CD4-positive, alpha-beta T cell (primary cell): ENCODE measurements at regions of chr13 and their contacts with region 1.

Region 1: DNA sequence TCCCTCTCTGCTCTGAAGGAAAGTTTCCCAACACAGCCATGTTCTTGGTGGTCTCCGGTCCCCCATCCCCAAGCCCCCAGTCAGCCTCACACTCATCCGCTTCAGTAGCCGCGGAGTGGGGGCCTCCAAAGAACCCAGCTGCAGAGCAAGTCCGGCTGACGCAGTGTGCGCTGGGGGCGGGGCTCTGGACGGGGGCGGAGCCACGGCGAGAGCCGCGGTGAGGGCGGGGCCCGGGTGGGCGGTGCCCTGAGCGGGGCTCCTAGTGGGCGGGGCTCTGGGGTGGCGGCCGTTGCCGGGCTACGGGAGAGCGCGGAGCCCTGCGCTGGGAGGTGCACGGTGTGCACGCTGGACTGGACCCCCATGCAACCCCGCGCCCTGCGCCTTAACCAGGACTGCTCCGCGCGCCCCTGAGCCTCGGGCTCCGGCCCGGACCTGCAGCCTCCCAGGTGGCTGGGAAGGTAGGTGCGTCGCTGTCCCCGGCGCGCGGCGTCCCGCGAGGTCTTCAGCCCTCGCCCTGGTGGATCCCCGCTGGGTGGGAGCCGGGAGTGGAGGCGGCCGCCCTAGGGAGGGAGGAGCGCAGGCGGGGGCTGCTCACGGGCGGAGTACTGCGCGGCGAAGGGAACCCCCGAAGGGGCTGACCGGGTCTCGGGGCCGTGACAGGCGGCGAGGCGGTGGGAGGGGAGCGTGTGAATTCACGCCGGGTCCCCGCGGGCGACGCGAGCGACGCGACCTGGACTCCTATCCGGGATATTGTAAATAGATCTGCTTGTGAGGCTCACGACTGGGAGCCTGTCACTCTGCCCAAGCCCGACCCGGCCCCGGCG is 9.1 kb downstream of the TNFRSF19 start:
- DNase-seq: peak; percentile 82 to 95 (median 90)
- ATAC-seq: peak; percentile 94
- H3K4me3 ChIP-seq: peak overlapping the region; percentile 70
- H3K4me3 Mint-ChIP-seq: peak overlapping the region; percentile 87
- H3K27ac ChIP-seq: peak overlapping the region in 1 of 2 donors; percentile 56
- H3K27ac Mint-ChIP-seq: no peak overlapping the region
- H3K4me1 ChIP-seq: peaks cover 18% of the 10 kb centered on the region
- H3K4me1 Mint-ChIP-seq: peaks cover 22% of the 10 kb centered on the region
- H3K27me3 ChIP-seq: peaks cover 10 to 37% of the 10 kb centered on the region in 2 experiments
- H3K27me3 Mint-ChIP-seq: peaks cover 68% of the 10 kb centered on the region
- CTCF ChIP-seq: no peak

Region 2: GRCh38 chr13:23466144-23467002 is 112.9 kb before region 1 on chr13:
- CTCF ChIA-PET with region 1: no interaction called
- POLR2A ChIA-PET with region 1: no interaction called
- intact Hi-C with region 1: loop called in 1 of 2 experiments (anchors 5 kb)
- DNase-seq: peak; percentile 28 to 81 (median 52)
- ATAC-seq: peak; percentile 88
- H3K4me3 ChIP-seq: peak overlapping the region; percentile 49
- H3K4me3 Mint-ChIP-seq: peak overlapping the region; percentile 86
- H3K27ac ChIP-seq: no peak overlapping the region
- H3K27ac Mint-ChIP-seq: no peak overlapping the region
- H3K4me1 ChIP-seq: peaks cover 14% of the 10 kb centered on the region
- H3K4me1 Mint-ChIP-seq: no peaks in the 10 kb centered on the region
- H3K27me3 ChIP-seq: no peaks in the 10 kb centered on the region
- H3K27me3 Mint-ChIP-seq: peaks cover 6% of the 10 kb centered on the region
- CTCF ChIP-seq: peak; percentile 63

Region 3: GRCh38 chr13:23871616-23872220 is 292.4 kb after region 1 on chr13:
- CTCF ChIA-PET with region 1: no interaction called
- POLR2A ChIA-PET with region 1: no interaction called
- intact Hi-C with region 1: loop called in 1 of 2 experiments (anchors 5 kb)
- DNase-seq: peak in 3 of 14 experiments; percentile 13 to 27 (median 18)
- ATAC-seq: no peak
- H3K4me3 ChIP-seq: no peak overlapping the region
- H3K4me3 Mint-ChIP-seq: no peak overlapping the region
- H3K27ac ChIP-seq: no peak overlapping the region
- H3K27ac Mint-ChIP-seq: no peak overlapping the region
- H3K4me1 ChIP-seq: no peaks in the 10 kb centered on the region
- H3K4me1 Mint-ChIP-seq: no peaks in the 10 kb centered on the region
- H3K27me3 ChIP-seq: no peaks in the 10 kb centered on the region
- H3K27me3 Mint-ChIP-seq: no peaks in the 10 kb centered on the region
- CTCF ChIP-seq: peak; percentile 80

Region 4: GRCh38 chr13:23888658-23889614 is 309.7 kb after region 1 on chr13 and contains the start of gene MIPEP:
- CTCF ChIA-PET with region 1: no interaction called
- POLR2A ChIA-PET with region 1: no interaction called
- intact Hi-C with region 1: loop called in 1 of 2 experiments (anchors 5 kb)
- DNase-seq: peak; percentile 68 to 94 (median 85)
- ATAC-seq: peak; percentile 91
- H3K4me3 ChIP-seq: peak within 1 kb of the TSS; percentile 81
- H3K4me3 Mint-ChIP-seq: peak within 1 kb of the TSS; percentile 94
- H3K27ac ChIP-seq: peak within 1 kb of the TSS; percentile 9 to 25
- H3K27ac Mint-ChIP-seq: peak within 1 kb of the TSS; percentile 76
- H3K4me1 ChIP-seq: peaks cover 18% of the 10 kb centered on the region
- H3K4me1 Mint-ChIP-seq: peaks cover 23% of the 10 kb centered on the region
- H3K27me3 ChIP-seq: no peaks in the 10 kb centered on the region
- H3K27me3 Mint-ChIP-seq: no peaks in the 10 kb centered on the region
- CTCF ChIP-seq: peak; percentile 86
- total RNA-seq, gene MIPEP: 3.9 to 4.8 TPM

Region 5: GRCh38 chr13:24160454-24161009 is 581.2 kb after region 1 on chr13 and contains the start of gene SPATA13:
- CTCF ChIA-PET with region 1: no interaction called
- POLR2A ChIA-PET with region 1: no interaction called
- intact Hi-C with region 1: loop called in 1 of 2 experiments (anchors 5 kb)
- DNase-seq: peak; percentile 89 to 99 (median 94)
- ATAC-seq: peak; percentile 92
- H3K4me3 ChIP-seq: peak within 1 kb of the TSS; percentile 81
- H3K4me3 Mint-ChIP-seq: peak within 1 kb of the TSS; percentile 90
- H3K27ac ChIP-seq: no peak within 1 kb of the TSS
- H3K27ac Mint-ChIP-seq: peak within 1 kb of the TSS; percentile 74
- H3K4me1 ChIP-seq: peaks cover 18% of the 10 kb centered on the region
- H3K4me1 Mint-ChIP-seq: peaks cover 14% of the 10 kb centered on the region
- H3K27me3 ChIP-seq: no peaks in the 10 kb centered on the region
- H3K27me3 Mint-ChIP-seq: no peaks in the 10 kb centered on the region
- CTCF ChIP-seq: no peak
- total RNA-seq, gene SPATA13: 87.7 to 94.6 TPM

Region 6: DNA sequence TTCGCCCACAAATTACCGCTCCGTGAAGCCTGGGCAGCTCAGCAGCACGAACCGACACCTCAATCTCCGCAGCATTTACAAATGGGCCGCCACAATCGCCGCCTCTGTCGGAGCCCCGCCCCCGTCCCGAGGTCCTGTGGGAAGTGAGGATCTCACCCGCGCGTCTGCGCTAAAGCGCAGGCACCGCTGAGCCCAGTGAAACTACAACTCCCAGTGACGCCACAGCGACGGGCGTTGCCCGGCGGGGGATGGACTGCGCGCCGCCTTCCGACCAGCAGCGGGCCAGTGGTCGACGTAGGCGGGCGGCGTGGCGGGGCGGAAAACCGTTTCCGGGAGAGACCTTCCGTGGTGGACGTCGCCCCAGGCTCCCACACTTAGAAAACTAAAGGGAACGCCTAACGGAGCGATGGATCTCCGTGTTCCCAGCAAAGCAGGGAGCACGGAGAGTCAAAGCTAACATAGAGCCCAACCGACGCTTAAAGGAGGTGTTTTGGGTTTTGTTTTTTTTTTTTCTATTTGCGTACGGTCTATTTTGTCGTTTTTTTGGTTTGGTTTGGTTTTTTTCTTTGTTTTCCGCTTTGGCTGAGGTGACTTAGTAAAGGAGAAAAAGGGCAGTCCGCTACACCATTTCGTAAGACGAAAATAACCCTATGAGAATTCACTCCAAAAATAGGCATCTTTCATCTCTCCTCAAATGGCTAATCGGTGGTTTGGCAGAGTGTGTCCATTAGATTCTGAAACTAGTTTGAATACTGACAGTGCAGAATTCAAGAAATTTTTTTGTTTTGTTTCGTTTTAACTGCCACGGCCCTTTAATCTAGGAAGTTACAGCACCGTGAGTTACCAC is 1343.7 kb after region 1 on chr13:
- CTCF ChIA-PET with region 1: no interaction called
- POLR2A ChIA-PET with region 1: no interaction called
- intact Hi-C with region 1: loop called in 1 of 2 experiments (anchors 5 kb)
- DNase-seq: peak; percentile 84 to 97 (median 90)
- ATAC-seq: peak; percentile 98
- H3K4me3 ChIP-seq: peak overlapping the region; percentile 91
- H3K4me3 Mint-ChIP-seq: peak overlapping the region; percentile 91
- H3K27ac ChIP-seq: peak overlapping the region; percentile 70 to 93
- H3K27ac Mint-ChIP-seq: peak overlapping the region; percentile 90
- H3K4me1 ChIP-seq: peaks cover 5% of the 10 kb centered on the region
- H3K4me1 Mint-ChIP-seq: peaks cover 18% of the 10 kb centered on the region
- H3K27me3 ChIP-seq: peaks cover 0 to under 1% of the 10 kb centered on the region in 2 experiments
- H3K27me3 Mint-ChIP-seq: no peaks in the 10 kb centered on the region
- CTCF ChIP-seq: no peak